MCF 10A (cell line): ENCODE measurements at regions of chr11 and their contacts with region 1.

Region 1: GRCh38 chr11:47213985-47214564 is 699 bp upstream of the DDB2 start:
- DNase-seq: peak; percentile 97
- H3K4me3 Mint-ChIP-seq: peak overlapping the region; percentile 76
- H3K27ac Mint-ChIP-seq: peak overlapping the region; percentile 91
- H3K4me1 Mint-ChIP-seq: peaks cover 12% of the 10 kb centered on the region
- H3K27me3 Mint-ChIP-seq: no peaks in the 10 kb centered on the region
- CTCF ChIP-seq: no peak

Region 2: DNA sequence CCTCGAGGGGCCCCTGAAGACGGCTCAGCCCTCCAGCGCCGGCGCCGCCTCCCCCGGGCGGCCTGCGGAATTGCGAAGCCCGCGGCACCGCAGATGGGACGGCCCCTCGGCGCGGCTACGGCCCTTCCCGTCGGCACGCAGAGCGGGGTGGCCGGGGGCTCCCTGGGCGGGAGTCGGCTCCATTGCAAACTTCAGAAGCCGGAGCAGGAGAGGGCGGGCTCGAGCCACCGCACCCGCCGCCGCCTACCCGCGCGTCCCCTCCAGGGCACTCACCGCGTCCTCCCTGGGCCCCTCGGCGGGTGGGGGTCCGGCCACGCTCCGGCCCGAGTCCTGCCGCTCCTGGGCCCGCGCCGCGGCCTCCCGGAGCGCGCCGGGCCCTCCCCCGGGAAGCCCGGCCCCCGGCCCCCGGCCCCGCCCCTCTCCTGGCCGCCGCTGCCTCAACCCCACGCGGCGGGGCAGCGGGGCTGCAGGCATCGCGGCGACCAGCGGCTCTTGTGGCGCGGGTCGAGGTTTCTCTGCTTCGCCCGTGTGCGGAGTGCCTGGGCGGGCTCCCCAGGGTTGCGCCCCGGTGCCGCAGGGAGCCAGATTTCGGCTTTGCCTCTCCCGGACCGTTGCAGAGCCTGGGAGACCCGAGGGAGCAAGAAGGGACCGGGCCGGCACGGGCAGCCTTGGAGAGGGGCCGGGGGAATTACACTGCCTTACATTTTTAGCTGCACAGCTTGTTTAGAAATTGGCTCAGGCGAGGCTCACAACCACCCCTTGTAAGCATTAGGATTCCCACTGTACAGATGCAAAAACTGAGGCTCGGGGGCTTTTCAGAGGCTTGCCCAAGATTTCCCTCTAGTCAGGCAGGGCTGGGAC is 27.8 kb before region 1 on chr11 and contains the start of gene PACSIN3:
- CTCF ChIA-PET with region 1: interaction called, 55 read pairs
- POLR2A ChIA-PET with region 1: interaction called, 199 read pairs
- intact Hi-C with region 1: loop called (anchors 2 kb)
- DNase-seq: peak; percentile 53
- H3K4me3 Mint-ChIP-seq: peak within 1 kb of the TSS; percentile 82
- H3K27ac Mint-ChIP-seq: peak within 1 kb of the TSS; percentile 51
- H3K4me1 Mint-ChIP-seq: peaks cover 12% of the 10 kb centered on the region
- H3K27me3 Mint-ChIP-seq: no peaks in the 10 kb centered on the region
- CTCF ChIP-seq: no peak
- total RNA-seq, gene PACSIN3: 58.7 and 67.0 TPM in 2 replicates

Region 3: DNA sequence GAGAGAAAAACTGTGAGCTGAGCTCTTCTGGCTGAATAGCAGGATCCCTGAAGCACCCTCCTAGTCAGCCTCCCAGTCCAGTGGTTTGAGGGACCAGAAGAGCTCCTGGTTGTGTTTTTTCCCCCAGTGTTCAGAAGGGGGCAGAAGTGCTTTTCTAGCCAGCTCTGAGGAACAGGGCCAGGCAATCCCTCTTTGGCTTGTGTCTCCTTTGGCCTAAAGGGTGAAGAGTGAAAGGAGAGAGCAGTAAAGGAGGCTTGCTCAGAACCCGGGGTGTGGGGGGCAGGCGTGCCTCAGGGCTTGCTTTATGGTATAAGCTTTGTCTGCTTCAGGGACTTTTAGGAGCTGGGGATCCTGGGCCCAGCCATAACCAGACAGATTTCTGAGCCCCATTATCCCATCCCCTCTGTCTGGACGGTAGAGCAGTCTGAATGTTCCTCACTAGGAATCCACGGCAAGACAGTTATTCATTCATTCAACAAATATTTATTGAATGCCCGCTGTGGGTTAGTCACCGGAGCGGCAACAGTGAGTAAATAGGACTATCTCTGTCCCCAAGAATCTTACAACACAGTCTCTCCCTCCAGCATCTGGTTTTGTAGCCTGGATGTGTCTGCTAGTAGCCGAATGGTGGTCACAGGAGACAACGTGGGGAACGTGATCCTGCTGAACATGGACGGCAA is 20.1 kb after region 1 on chr11:
- CTCF ChIA-PET with region 1: interaction called, 5 read pairs
- POLR2A ChIA-PET with region 1: interaction called, 32 read pairs
- intact Hi-C with region 1: no loop called
- DNase-seq: peak; percentile 57
- H3K4me3 Mint-ChIP-seq: no peak overlapping the region
- H3K27ac Mint-ChIP-seq: peak overlapping the region; percentile 72
- H3K4me1 Mint-ChIP-seq: peaks cover 14% of the 10 kb centered on the region
- H3K27me3 Mint-ChIP-seq: no peaks in the 10 kb centered on the region
- CTCF ChIP-seq: no peak

Region 4: DNA sequence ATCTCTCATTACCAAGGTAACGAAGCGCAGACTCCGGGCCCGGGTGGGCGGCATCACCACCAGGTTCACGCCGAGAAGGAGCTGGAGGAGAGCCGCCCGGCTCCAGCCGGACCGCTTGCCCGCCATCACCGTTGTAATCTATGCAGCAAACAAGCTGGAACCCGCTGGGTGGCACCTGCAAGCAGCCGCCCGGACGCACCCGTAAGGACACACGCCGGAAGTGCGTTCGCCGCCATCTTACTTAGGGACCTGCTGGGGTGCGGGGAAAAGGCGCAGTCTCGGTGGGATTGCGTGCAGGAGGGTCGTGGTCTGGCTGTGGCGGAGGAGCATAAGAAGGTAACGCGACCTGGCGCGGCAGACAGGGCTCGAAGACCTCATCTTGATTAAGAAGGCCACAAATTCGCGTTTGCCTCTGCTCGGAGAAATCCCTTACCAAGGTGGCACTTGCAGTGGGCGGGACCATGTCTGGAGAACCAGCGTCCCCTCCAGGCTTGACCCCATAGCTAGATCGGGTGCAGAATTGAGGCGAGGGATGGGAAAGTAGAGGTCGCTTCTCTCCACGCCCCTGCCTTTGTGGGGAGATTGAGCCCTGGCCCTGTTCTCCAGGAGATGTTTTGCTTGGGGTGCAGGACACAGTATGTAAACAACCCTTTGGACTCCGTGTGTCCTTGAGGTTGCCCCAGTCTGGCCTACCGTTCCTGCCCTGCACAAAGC is 34.7 kb after region 1 on chr11 and contains the start of gene ACP2:
- CTCF ChIA-PET with region 1: interaction called, 3 read pairs
- POLR2A ChIA-PET with region 1: interaction called, 40 read pairs
- intact Hi-C with region 1: no loop called
- DNase-seq: peak; percentile 85
- H3K4me3 Mint-ChIP-seq: peak within 1 kb of the TSS; percentile 91
- H3K27ac Mint-ChIP-seq: peak within 1 kb of the TSS; percentile 98
- H3K4me1 Mint-ChIP-seq: peaks cover 4% of the 10 kb centered on the region
- H3K27me3 Mint-ChIP-seq: no peaks in the 10 kb centered on the region
- CTCF ChIP-seq: peak; percentile 9
- total RNA-seq, gene ACP2: 18.7 and 23.7 TPM in 2 replicates

Region 5: DNA sequence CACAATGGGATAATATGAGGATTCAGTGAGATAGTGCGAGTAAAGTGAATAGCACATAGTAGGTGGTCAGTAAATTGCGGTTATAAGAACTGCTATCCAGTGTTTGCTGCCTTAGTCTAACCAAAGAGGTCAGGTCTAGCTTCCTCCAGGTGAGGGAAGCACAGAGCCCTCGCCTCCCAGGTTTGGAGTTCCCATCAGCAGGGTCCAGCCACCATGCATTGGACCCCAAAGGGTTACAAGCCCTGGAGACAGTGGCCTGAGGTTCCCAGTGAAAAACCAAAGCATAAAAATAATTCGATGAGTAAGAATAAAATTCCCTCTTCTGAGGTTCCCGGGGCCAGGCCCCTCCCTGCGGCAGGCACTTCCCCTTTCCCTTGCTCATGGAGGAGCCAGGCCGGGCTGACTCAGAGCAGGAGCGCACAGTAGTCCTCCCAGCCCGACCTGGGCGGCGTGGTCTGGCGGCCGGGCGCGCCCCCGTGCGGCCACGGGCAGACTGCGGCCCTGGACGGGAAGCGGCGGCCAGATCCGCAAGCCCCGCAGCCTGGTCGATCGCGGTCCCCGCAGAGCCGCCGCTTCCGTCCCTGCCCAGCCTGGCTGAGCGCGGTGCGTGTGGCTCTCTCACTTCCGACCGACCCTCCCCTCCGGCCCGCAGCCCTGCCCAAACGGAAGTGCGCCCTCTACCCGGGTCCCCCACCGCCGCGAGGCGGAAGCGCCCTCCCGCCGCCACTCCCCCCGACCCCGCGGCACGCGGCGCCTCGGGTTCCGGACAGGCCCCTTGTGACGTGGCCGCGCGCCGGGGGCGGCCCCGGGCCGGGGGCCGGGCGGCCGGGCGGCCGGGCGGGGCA is 193.9 kb after region 1 on chr11 and contains the start of gene SLC39A13:
- CTCF ChIA-PET with region 1: no interaction called
- POLR2A ChIA-PET with region 1: interaction called, 10 read pairs
- intact Hi-C with region 1: no loop called
- DNase-seq: peak; percentile 91
- H3K4me3 Mint-ChIP-seq: peak within 1 kb of the TSS; percentile 93
- H3K27ac Mint-ChIP-seq: peak within 1 kb of the TSS; percentile 98
- H3K4me1 Mint-ChIP-seq: peaks cover 24% of the 10 kb centered on the region
- H3K27me3 Mint-ChIP-seq: no peaks in the 10 kb centered on the region
- CTCF ChIP-seq: peak; percentile 79
- total RNA-seq, gene SLC39A13: 56.2 and 56.5 TPM in 2 replicates